Common myeloid progenitor, CD34-positive (primary cell): ENCODE measurements at regions of chr14 and their contacts with region 1.

Region 1: GRCh38 chr14:72104011-72104613 is 171.9 kb downstream of the RGS6 start:
- DNase-seq: peak; percentile 25 to 49 (median 45)
- H3K4me3 ChIP-seq: no peak overlapping the region
- H3K27ac ChIP-seq: no peak overlapping the region
- H3K4me1 ChIP-seq: peaks cover 0 to 5% (median 0%) of the 10 kb centered on the region in 4 experiments
- H3K27me3 ChIP-seq: no peaks in the 10 kb centered on the region

Region 2: GRCh38 chr14:72124171-72124570 is 20.1 kb after region 1 on chr14:
- CTCF ChIA-PET with region 1: interaction called, 12 read pairs
- POLR2A ChIA-PET with region 1: no interaction called
- DNase-seq: peak in 1 of 3 donors; percentile 13
- H3K4me3 ChIP-seq: peak overlapping the region in 2 of 7 experiments; percentile 11 to 24
- H3K27ac ChIP-seq: no peak overlapping the region
- H3K4me1 ChIP-seq: peaks cover 8 to 25% (median 12%) of the 10 kb centered on the region in 4 experiments
- H3K27me3 ChIP-seq: no peaks in the 10 kb centered on the region

Region 3: DNA sequence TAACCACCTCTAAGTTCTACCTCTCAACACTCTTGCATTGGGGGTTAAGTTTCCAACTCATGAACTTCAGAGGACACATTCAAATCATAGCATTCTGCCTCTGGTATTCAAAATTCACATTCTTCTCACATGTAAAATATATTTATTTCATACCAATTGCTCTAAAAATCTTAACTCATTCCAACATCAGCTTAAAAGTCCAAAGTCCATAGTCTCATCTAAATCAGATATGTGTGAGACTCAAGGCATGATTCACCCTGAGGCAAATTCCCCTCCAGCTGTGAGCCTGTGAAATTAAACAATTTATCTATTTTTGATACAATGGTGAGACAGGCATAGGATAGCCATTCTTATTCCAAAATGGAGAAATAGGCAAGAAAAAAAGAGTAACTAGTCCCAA is 42.1 kb after region 1 on chr14:
- CTCF ChIA-PET with region 1: no interaction called
- POLR2A ChIA-PET with region 1: no interaction called
- DNase-seq: no peak
- H3K4me3 ChIP-seq: no peak overlapping the region
- H3K27ac ChIP-seq: no peak overlapping the region
- H3K4me1 ChIP-seq: no peaks in the 10 kb centered on the region
- H3K27me3 ChIP-seq: no peaks in the 10 kb centered on the region

Region 4: GRCh38 chr14:72380456-72380855 is 276.3 kb after region 1 on chr14:
- CTCF ChIA-PET with region 1: no interaction called
- POLR2A ChIA-PET with region 1: no interaction called
- DNase-seq: peak; percentile 15 to 81 (median 74)
- H3K4me3 ChIP-seq: no peak overlapping the region
- H3K27ac ChIP-seq: no peak overlapping the region
- H3K4me1 ChIP-seq: peaks cover 0 to 11% (median 1%) of the 10 kb centered on the region in 4 experiments
- H3K27me3 ChIP-seq: no peaks in the 10 kb centered on the region